ENCODE measurements at regions of chr12 and their contacts with region 1.

Region 1: DNA sequence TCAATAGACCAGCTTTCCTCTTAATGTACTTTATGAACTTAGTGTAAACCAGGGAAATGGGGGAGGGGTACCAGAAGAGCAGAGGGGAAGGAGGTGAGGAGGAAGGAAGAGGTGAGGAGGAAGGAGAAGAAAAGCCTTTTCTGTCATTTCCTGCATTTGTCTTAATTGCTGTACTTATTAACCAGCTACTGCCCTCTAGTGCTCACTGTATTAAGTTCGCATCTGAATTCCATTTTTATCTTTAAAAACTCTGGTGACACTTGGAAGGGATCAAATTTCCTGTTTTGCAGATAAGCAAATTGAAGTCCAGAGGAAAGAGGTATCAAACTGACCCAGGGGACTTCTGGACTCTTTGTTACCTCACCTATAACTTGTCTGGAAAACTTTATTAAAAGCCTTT is 22.2 kb downstream of the MANSC1 start:
- DNase-seq: peak in 5 of 9 experiments; percentile 4 to 78 (median 25)
- ATAC-seq: peak; percentile 63
- H3K4me3 ChIP-seq: no peak overlapping the region
- H3K4me3 Mint-ChIP-seq: no peak overlapping the region
- H3K27ac ChIP-seq: no peak overlapping the region
- H3K27ac Mint-ChIP-seq: peak overlapping the region; percentile 63
- H3K4me1 ChIP-seq: peaks cover 10% of the 10 kb centered on the region
- H3K4me1 Mint-ChIP-seq: peaks cover 8% of the 10 kb centered on the region
- H3K27me3 ChIP-seq: no peaks in the 10 kb centered on the region
- H3K27me3 Mint-ChIP-seq: peaks cover 2% of the 10 kb centered on the region
- CTCF ChIP-seq: peak; percentile 85

Region 2: DNA sequence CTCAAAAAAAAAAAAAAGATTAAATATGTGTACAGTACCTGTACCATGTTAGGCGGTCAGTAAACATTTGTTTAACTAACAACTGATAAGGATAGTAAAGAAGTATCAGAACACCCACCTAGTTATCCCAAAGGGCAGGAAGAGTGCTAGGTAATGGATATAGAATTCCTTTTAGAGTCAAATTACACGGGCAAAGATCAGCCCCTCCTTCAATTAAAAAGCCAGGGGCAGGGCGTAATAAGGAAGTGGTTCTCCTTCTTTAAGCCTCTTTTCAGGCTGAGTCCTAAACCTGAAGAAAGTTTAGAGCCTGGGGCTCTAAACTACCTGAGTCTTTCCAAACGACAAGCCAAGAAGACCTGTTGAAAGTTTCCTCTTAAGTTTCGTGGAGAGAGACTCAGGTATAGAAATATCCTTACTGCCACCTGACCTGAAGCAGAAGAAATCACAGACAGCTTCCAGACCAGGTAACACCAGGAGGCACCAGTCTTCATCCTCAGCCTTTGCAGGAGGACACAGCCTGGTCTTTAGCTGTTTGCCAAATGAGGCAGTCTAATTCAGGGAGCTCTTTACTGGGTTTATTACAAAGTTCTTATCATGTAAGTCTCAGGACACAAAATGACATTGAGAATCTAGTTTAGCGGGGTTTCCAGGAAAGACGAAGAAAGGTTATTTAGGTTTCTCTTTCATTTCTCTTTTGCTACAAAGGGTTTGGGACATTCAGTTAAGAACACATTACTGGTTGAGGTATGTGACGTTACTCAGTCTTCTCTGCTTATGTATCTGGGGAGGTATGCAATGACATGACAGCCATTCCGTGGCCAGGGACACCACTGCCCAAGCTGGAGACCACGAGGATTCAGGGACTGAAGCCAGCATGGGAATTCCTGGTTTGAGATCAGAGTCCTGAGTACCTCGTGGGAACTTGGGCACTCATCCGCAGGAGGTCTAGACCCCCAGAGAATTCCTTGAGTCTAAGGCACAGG is 256.8 kb before region 1 on chr12 and contains the start of gene BCL2L14:
- CTCF ChIA-PET with region 1: no interaction called
- POLR2A ChIA-PET with region 1: no interaction called
- intact Hi-C with region 1: loop called in 1 of 2 experiments (anchors 5 kb)
- DNase-seq: peak in 2 of 9 experiments; percentile 7 to 37
- ATAC-seq: peak; percentile 64
- H3K4me3 ChIP-seq: peak within 1 kb of the TSS; percentile 34 to 44
- H3K4me3 Mint-ChIP-seq: peak within 1 kb of the TSS; percentile 74
- H3K27ac ChIP-seq: no peak within 1 kb of the TSS
- H3K27ac Mint-ChIP-seq: peak within 1 kb of the TSS; percentile 69
- H3K4me1 ChIP-seq: peaks cover 13% of the 10 kb centered on the region
- H3K4me1 Mint-ChIP-seq: peaks cover 22% of the 10 kb centered on the region
- H3K27me3 ChIP-seq: peaks cover 3 to 4% of the 10 kb centered on the region in 2 experiments
- H3K27me3 Mint-ChIP-seq: no peaks in the 10 kb centered on the region
- CTCF ChIP-seq: no peak
- total RNA-seq, gene BCL2L14: 0.38 to 0.61 TPM

Region 3: GRCh38 chr12:12081836-12082497 is 245.8 kb before region 1 on chr12:
- CTCF ChIA-PET with region 1: interaction called, 16 read pairs
- POLR2A ChIA-PET with region 1: no interaction called
- intact Hi-C with region 1: no loop called
- DNase-seq: peak in 2 of 9 experiments; percentile 26 to 35
- ATAC-seq: no peak
- H3K4me3 ChIP-seq: no peak overlapping the region
- H3K4me3 Mint-ChIP-seq: no peak overlapping the region
- H3K27ac ChIP-seq: no peak overlapping the region
- H3K27ac Mint-ChIP-seq: no peak overlapping the region
- H3K4me1 ChIP-seq: no peaks in the 10 kb centered on the region
- H3K4me1 Mint-ChIP-seq: no peaks in the 10 kb centered on the region
- H3K27me3 ChIP-seq: no peaks in the 10 kb centered on the region
- H3K27me3 Mint-ChIP-seq: no peaks in the 10 kb centered on the region
- CTCF ChIP-seq: no peak

Region 4: GRCh38 chr12:12194206-12194605 is 133.6 kb before region 1 on chr12:
- CTCF ChIA-PET with region 1: no interaction called
- POLR2A ChIA-PET with region 1: no interaction called
- intact Hi-C with region 1: no loop called
- DNase-seq: no peak
- ATAC-seq: no peak
- H3K4me3 ChIP-seq: no peak overlapping the region
- H3K4me3 Mint-ChIP-seq: no peak overlapping the region
- H3K27ac ChIP-seq: no peak overlapping the region
- H3K27ac Mint-ChIP-seq: no peak overlapping the region
- H3K4me1 ChIP-seq: no peaks in the 10 kb centered on the region
- H3K4me1 Mint-ChIP-seq: no peaks in the 10 kb centered on the region
- H3K27me3 ChIP-seq: peaks cover 0 to 6% of the 10 kb centered on the region in 2 experiments
- H3K27me3 Mint-ChIP-seq: peaks cover 16% of the 10 kb centered on the region
- CTCF ChIP-seq: no peak

Region 5: DNA sequence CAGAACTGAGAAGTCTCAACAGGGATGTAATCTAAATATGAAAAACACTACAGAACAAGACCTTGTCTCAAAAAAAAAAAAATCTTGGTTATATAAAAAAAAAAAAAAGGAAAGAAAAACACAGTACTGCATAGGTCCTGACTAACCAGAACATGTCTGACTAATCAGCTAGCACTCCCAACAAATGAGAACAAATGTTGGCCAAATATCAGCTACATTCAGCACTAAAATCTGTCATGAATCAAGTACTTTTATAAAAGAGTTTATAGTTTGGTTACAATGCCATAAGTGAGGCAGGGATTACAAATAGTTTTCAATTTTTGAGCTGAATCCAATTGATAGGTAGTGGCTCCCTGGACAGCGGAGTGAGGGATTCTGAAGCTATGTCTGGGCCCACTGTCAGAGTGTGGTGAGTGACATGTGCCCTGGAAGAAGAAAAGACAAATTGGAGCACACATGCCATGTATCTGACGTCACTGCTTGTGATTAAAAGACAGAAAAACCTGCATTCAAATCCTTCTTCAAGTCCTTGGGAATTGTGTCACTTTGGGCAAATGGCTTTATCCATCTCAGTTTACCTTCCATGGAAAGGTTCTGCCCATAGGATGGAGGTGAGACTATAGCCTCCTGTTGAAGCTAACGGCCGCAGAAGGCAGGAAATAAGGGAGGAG is 710.8 kb after region 1 on chr12:
- CTCF ChIA-PET with region 1: no interaction called
- POLR2A ChIA-PET with region 1: no interaction called
- intact Hi-C with region 1: no loop called
- DNase-seq: no peak
- ATAC-seq: no peak
- H3K4me3 ChIP-seq: no peak overlapping the region
- H3K4me3 Mint-ChIP-seq: no peak overlapping the region
- H3K27ac ChIP-seq: no peak overlapping the region
- H3K27ac Mint-ChIP-seq: no peak overlapping the region
- H3K4me1 ChIP-seq: no peaks in the 10 kb centered on the region
- H3K4me1 Mint-ChIP-seq: no peaks in the 10 kb centered on the region
- H3K27me3 ChIP-seq: no peaks in the 10 kb centered on the region
- H3K27me3 Mint-ChIP-seq: no peaks in the 10 kb centered on the region
- CTCF ChIP-seq: no peak

Measured in CD8-positive, alpha-beta T cell (primary cell).